ENCODE measurements at regions of chr12 and their contacts with region 1.

Region 1: GRCh38 chr12:32522331-32523221 is 123.2 kb downstream of the FGD4 start:
- DNase-seq: no peak
- ATAC-seq: peak; percentile 82
- H3K4me3 Mint-ChIP-seq: peak overlapping the region; percentile 67
- H3K27ac Mint-ChIP-seq: peak overlapping the region; percentile 85
- H3K4me1 Mint-ChIP-seq: peaks cover 28% of the 10 kb centered on the region
- H3K27me3 Mint-ChIP-seq: no peaks in the 10 kb centered on the region
- CTCF ChIP-seq: no peak

Region 2: DNA sequence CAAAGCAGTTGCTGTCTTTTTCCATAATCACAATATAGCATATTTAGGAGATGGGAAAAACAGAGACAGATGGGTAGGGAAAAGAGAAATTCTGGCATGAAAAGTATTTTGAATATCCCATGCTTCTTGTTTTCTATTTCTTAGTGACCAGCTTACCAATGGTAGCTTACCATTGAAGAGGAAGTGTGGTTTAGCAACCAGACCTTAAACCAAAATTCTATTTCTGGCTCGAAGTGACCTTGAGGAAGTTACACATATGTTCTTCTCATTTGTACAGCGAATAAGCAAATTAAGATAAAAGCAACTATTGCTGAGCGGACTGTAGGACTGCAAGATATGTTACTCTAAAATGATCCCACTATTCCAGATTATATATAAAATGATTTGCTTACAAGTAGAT is 40.4 kb before region 1 on chr12:
- CTCF ChIA-PET with region 1: no interaction called
- POLR2A ChIA-PET with region 1: no interaction called
- intact Hi-C with region 1: loop called (anchors 5 kb)
- DNase-seq: no peak
- ATAC-seq: peak; percentile 34
- H3K4me3 Mint-ChIP-seq: peak overlapping the region; percentile 68
- H3K27ac Mint-ChIP-seq: no peak overlapping the region
- H3K4me1 Mint-ChIP-seq: peaks cover 54% of the 10 kb centered on the region
- H3K27me3 Mint-ChIP-seq: no peaks in the 10 kb centered on the region
- CTCF ChIP-seq: no peak

Region 3: DNA sequence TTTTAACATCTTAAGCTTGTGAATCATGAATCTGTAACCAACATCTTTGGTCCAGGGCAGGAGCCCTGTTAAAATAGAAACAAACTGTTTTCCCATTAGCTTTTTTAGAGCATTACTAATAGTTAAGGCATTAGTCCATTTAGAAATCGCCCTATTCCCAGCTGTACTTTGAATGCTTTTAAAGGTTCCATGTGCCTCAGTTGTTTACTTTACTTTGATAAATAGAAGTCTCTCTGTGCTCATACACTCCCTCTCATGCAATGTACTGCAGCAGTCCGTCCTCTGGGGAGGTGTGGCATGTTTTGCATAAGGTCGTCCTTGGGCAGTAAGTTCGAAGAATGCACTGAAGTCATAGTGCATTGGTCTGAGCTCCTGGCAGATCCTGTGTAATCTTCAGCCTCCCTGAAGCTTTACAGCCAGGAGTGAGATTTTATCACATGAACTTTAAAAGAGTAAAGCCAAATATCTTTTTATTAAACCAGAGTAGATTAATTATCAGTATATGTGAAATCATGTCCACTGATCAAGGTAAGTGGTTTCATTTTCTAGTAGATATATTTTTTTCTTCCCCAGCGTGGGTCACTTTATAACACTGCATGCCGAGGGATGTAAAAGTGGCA is 11.5 kb after region 1 on chr12:
- CTCF ChIA-PET with region 1: no interaction called
- POLR2A ChIA-PET with region 1: interaction called, 7 read pairs
- intact Hi-C with region 1: loop called (anchors 1 kb)
- DNase-seq: no peak
- ATAC-seq: peak; percentile 83
- H3K4me3 Mint-ChIP-seq: peak overlapping the region; percentile 84
- H3K27ac Mint-ChIP-seq: peak overlapping the region; percentile 62
- H3K4me1 Mint-ChIP-seq: peaks cover 42% of the 10 kb centered on the region
- H3K27me3 Mint-ChIP-seq: no peaks in the 10 kb centered on the region
- CTCF ChIP-seq: no peak

Region 4: GRCh38 chr12:32558903-32559302 is 36.3 kb after region 1 on chr12:
- CTCF ChIA-PET with region 1: no interaction called
- POLR2A ChIA-PET with region 1: no interaction called
- intact Hi-C with region 1: loop called (anchors 5 kb)
- DNase-seq: no peak
- ATAC-seq: peak; percentile 92
- H3K4me3 Mint-ChIP-seq: peak overlapping the region; percentile 36
- H3K27ac Mint-ChIP-seq: peak overlapping the region; percentile 71
- H3K4me1 Mint-ChIP-seq: peaks cover 23% of the 10 kb centered on the region
- H3K27me3 Mint-ChIP-seq: no peaks in the 10 kb centered on the region
- CTCF ChIP-seq: no peak

Region 5: GRCh38 chr12:32583534-32583933 is 61.0 kb after region 1 on chr12:
- CTCF ChIA-PET with region 1: no interaction called
- POLR2A ChIA-PET with region 1: no interaction called
- intact Hi-C with region 1: no loop called
- DNase-seq: no peak
- ATAC-seq: no peak
- H3K4me3 Mint-ChIP-seq: no peak overlapping the region
- H3K27ac Mint-ChIP-seq: no peak overlapping the region
- H3K4me1 Mint-ChIP-seq: peaks cover 16% of the 10 kb centered on the region
- H3K27me3 Mint-ChIP-seq: no peaks in the 10 kb centered on the region
- CTCF ChIP-seq: no peak

Measured in activated B cell treated with CpG ODN at 0.5 μM for 24 hours (primary cell).